Activated B cell treated with CpG ODN at 0.5 μM for 24 hours (primary cell): ENCODE measurements at regions of chrX and their contacts with region 1.

Region 1: GRCh38 chrX:74614093-74614909 is at the start of gene RLIM:
- DNase-seq: peak; percentile 74
- ATAC-seq: peak; percentile 83
- H3K4me3 Mint-ChIP-seq: peak within 1 kb of the TSS; percentile 96
- H3K27ac Mint-ChIP-seq: peak within 1 kb of the TSS; percentile 96
- H3K4me1 Mint-ChIP-seq: peaks cover 22% of the 10 kb centered on the region
- H3K27me3 Mint-ChIP-seq: no peaks in the 10 kb centered on the region
- CTCF ChIP-seq: no peak
- total RNA-seq, gene RLIM: 32.2 and 34.0 TPM in 2 replicates

Region 2: DNA sequence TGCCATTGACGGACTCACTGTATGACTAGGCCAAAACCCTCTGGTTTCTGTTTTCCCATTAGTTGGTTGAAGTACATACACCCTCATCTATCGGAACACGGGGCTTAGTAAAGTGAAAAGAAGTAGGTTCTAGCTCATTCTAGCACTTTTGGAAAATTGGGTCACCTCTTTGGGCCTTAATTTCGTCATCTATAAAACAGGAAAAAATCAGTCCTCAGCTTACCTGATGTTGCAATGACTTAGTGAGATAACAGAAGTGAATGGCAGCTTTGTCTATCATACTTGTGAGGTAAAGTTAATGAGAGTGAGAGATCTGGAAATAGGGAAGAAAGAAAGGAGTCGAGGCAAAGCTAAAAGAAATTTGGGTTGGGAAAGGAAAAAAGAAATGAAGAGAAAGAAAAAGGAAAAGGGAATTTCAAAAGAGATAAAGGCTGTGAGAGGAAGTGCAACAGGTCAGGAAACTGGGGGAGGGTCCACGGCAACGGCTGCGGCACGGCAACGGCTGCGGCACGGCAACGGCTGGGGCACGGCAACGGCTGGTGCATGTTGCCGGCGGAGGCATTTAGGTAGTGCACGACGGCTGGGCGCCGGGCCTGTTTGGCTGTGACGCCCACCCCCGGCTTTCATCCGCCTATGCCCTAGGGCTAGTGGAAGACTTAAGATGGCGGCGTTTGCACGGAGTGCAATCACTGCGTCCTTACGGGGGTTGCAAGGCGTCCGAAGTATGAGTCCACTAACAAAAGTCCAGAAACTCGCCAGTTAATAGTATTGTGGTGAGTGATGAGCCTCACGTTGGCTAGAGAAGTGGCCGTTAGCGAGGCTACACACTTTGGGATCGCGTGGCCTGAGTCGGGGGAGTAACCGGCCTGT is 670.4 kb before region 1 on chrX:
- CTCF ChIA-PET with region 1: no interaction called
- POLR2A ChIA-PET with region 1: no interaction called
- intact Hi-C with region 1: loop called (anchors 1 kb)
- DNase-seq: peak; percentile 68
- ATAC-seq: peak; percentile 99
- H3K4me3 Mint-ChIP-seq: peak overlapping the region; percentile 95
- H3K27ac Mint-ChIP-seq: peak overlapping the region; percentile 94
- H3K4me1 Mint-ChIP-seq: peaks cover 21% of the 10 kb centered on the region
- H3K27me3 Mint-ChIP-seq: no peaks in the 10 kb centered on the region
- CTCF ChIP-seq: no peak

Region 3: GRCh38 chrX:74318672-74319071 is 295.6 kb before region 1 on chrX:
- CTCF ChIA-PET with region 1: no interaction called
- POLR2A ChIA-PET with region 1: no interaction called
- intact Hi-C with region 1: no loop called
- DNase-seq: no peak
- ATAC-seq: no peak
- H3K4me3 Mint-ChIP-seq: no peak overlapping the region
- H3K27ac Mint-ChIP-seq: no peak overlapping the region
- H3K4me1 Mint-ChIP-seq: no peaks in the 10 kb centered on the region
- H3K27me3 Mint-ChIP-seq: no peaks in the 10 kb centered on the region
- CTCF ChIP-seq: no peak

Region 4: DNA sequence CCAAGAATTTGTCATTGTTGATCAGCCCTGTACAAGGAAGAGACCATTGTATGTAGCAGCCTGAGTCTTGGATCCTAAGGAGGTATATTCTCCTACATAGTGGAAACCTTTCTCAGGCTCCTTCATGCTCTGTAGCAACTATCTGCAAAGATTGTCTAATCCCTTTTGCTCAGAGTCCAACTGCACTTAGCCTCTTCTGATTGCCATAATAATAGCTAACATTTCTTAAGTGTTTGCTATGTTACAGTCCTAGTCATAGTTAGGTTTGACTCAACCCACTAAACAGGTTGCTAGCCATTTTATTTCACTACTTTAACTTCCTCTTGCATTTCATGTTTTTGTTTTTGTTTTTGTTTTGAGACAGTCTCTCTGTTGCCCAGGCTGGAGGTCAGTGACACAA is 243.8 kb before region 1 on chrX:
- CTCF ChIA-PET with region 1: no interaction called
- POLR2A ChIA-PET with region 1: no interaction called
- intact Hi-C with region 1: no loop called
- DNase-seq: no peak
- ATAC-seq: no peak
- H3K4me3 Mint-ChIP-seq: no peak overlapping the region
- H3K27ac Mint-ChIP-seq: no peak overlapping the region
- H3K4me1 Mint-ChIP-seq: no peaks in the 10 kb centered on the region
- H3K27me3 Mint-ChIP-seq: no peaks in the 10 kb centered on the region
- CTCF ChIP-seq: no peak

Region 5: DNA sequence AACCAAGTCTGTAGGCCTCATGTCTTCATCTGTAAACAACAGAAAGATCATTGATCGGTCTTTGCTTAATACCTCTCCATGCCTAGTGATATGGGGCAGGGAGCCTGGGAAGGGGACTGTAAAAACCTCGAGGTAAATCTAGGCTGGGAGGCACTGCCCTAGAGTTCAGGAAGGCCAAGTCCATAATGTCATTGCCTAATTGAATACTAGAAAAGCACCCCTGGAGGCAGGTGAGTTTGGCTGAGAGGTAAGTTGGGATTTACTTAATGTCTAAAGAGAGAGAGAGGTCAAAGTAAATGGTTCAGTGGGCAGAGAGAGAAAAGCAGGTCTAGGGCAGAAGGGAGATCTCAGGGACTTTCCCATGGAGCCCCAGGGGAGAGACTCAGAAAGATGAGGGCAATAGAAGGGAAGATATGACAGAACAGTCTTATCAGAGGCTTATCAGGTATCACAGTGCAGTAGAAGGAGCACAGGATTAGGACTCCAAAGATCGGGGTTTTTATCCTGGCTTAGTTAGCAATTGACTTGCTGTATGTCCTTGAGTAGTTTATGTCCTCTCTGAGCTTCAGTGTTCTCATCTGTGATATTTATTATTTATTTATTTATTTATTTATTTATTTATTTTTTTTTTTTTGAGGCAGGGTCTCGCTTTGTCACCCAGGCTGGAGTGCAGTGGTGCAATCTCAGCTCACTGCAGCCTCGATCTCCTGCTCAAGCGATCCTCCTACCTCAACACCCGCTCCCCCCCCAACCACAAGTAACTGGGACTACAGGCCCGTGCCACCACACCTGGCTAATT is 107.8 kb before region 1 on chrX:
- CTCF ChIA-PET with region 1: no interaction called
- POLR2A ChIA-PET with region 1: no interaction called
- intact Hi-C with region 1: loop called (anchors 1 kb)
- DNase-seq: peak; percentile 18
- ATAC-seq: peak; percentile 99
- H3K4me3 Mint-ChIP-seq: peak overlapping the region; percentile 17
- H3K27ac Mint-ChIP-seq: peak overlapping the region; percentile 69
- H3K4me1 Mint-ChIP-seq: peaks cover 24% of the 10 kb centered on the region
- H3K27me3 Mint-ChIP-seq: no peaks in the 10 kb centered on the region
- CTCF ChIP-seq: no peak

Region 6: GRCh38 chrX:74636749-74637314 is 22.5 kb after region 1 on chrX:
- CTCF ChIA-PET with region 1: no interaction called
- POLR2A ChIA-PET with region 1: no interaction called
- intact Hi-C with region 1: no loop called
- DNase-seq: no peak
- ATAC-seq: no peak
- H3K4me3 Mint-ChIP-seq: no peak overlapping the region
- H3K27ac Mint-ChIP-seq: no peak overlapping the region
- H3K4me1 Mint-ChIP-seq: no peaks in the 10 kb centered on the region
- H3K27me3 Mint-ChIP-seq: peaks cover 17% of the 10 kb centered on the region
- CTCF ChIP-seq: no peak

Region 7: GRCh38 chrX:75156021-75156945 is 542.0 kb after region 1 on chrX and contains the start of gene ABCB7:
- CTCF ChIA-PET with region 1: no interaction called
- POLR2A ChIA-PET with region 1: no interaction called
- intact Hi-C with region 1: loop called (anchors 1 kb)
- DNase-seq: peak; percentile 41
- ATAC-seq: peak; percentile 91
- H3K4me3 Mint-ChIP-seq: peak within 1 kb of the TSS; percentile 94
- H3K27ac Mint-ChIP-seq: peak within 1 kb of the TSS; percentile 96
- H3K4me1 Mint-ChIP-seq: peaks cover 39% of the 10 kb centered on the region
- H3K27me3 Mint-ChIP-seq: no peaks in the 10 kb centered on the region
- CTCF ChIP-seq: no peak
- total RNA-seq, gene ABCB7: 41.3 and 42.2 TPM in 2 replicates

Region 8: DNA sequence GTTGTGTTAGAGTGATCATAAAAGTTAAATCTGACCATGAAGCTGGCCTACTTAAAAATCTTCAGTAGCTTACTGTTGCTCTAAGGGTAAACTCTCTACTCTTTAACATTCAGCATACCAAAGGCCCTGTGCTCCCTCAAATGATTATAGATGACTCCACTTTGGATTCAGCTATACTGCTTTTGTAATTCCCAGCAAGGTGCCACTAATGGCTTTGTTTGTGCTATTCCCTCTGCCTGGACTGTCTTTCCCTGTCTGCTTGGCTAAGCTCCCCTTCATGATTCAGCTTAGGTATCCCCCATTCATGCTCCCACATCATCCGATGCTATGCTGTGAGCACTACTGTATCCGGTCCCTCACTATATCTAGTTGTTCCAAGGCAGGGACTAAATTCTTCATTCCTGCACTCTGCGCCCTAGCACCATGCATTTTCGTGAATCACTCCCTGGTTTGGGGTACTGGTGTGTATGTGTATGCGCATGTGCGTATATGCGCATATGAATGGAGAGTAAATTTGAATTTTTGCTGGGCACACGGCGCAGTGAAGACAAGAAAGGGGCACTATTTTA is 1558.1 kb after region 1 on chrX:
- CTCF ChIA-PET with region 1: no interaction called
- POLR2A ChIA-PET with region 1: interaction called, 3 read pairs
- intact Hi-C with region 1: loop called (anchors 2 kb)
- DNase-seq: no peak
- ATAC-seq: peak; percentile 51
- H3K4me3 Mint-ChIP-seq: peak overlapping the region; percentile 97
- H3K27ac Mint-ChIP-seq: peak overlapping the region; percentile 92
- H3K4me1 Mint-ChIP-seq: peaks cover 42% of the 10 kb centered on the region
- H3K27me3 Mint-ChIP-seq: no peaks in the 10 kb centered on the region
- CTCF ChIP-seq: no peak